ENCODE measurements at regions of chr6 and their contacts with region 1.

Region 1: DNA sequence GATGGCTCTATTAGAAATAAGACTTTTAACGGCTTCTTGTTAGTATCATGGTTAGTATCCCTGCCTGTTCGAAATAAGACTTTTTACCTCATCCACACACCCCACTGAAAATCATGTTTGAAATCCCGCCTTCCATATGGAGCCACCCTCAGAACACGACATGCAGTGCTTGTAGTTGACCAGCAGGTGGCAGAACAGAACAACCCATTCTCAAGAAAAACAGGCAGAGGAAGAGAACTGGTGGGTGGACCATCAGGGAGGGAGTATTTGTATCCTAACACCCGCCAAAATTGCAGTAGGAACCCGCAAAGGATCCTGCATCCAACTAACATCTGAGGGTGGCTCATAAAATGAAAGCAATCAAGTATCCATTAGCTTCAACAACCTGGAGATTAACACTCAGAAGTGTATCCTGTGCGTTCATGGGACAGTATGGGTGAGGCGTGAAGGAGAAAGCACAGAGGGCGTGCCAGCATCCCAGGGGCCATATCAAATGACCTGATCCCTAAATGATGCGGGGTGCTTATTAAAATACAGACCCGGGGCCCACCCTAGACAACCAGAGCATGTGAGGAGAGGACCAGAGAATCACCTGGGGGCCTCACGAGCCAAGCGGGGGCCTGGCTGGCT is 89.6 kb upstream of the NHSL1 start:
- DNase-seq: peak; percentile 55
- H3K4me3 ChIP-seq: no peak overlapping the region
- H3K27ac ChIP-seq: no peak overlapping the region
- H3K4me1 ChIP-seq: peaks cover 18% of the 10 kb centered on the region
- H3K27me3 ChIP-seq: no peaks in the 10 kb centered on the region
- CTCF ChIP-seq: peak; percentile 93 to 94

Region 2: DNA sequence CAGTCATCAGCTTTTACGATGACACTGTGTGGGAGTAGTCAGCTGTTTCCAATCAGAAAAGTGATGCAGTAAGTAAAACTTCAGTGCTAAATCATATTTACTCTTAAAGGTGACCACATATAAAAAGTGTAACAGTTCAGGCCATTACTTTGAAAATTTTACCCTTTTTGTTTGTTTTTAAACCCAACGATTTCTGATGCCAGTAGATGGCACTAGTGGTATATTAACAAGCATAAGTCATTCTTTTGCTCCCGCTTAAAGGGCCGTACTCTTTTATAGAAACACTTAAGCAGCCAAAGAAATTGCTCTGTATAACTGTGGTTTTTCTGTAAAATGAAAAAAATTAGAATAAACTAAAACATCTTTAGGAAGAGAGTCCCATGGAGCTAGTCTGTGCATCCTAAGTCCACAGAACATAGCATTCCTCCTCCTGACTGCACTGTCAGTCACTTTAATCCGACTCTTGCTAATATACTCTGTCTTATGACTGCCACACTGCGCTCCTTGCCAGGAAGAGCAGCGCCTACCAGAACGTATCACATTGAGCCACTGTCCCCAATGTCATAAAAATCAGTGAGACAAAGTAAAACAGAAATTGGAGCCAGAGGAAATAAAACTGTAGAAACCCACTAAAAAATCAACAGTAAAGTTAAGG is 159.8 kb before region 1 on chr6:
- CTCF ChIA-PET with region 1: no interaction called
- dilution Hi-C with region 1: no loop called
- in situ Hi-C with region 1: no loop called
- intact Hi-C with region 1: loop called (anchors 1 kb)
- DNase-seq: peak; percentile 24
- H3K4me3 ChIP-seq: no peak overlapping the region
- H3K27ac ChIP-seq: no peak overlapping the region
- H3K4me1 ChIP-seq: peaks cover 4% of the 10 kb centered on the region
- H3K27me3 ChIP-seq: no peaks in the 10 kb centered on the region
- CTCF ChIP-seq: peak; percentile 57 to 63

Region 3: DNA sequence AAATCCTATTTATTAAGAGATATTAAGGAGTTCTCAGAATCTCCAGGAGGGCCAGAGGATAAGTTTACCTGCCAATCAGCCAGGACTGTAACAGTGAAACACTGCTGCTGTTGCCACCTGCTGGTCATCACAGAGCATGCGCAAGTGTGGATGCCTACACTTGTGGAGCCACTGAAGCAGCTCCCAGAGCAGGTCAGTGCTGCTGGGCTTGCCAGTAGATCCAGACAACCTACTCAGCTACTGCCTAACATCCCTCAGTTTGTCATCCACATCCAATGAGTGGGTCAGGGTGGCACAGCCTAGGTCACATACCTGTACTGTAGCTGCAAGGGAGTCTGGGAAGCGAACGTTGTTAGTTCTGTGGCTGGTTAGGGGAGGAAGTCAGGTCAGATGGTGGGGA is 71.3 kb before region 1 on chr6:
- CTCF ChIA-PET with region 1: no interaction called
- dilution Hi-C with region 1: no loop called
- in situ Hi-C with region 1: no loop called
- intact Hi-C with region 1: loop called (anchors 5 kb)
- DNase-seq: peak; percentile 48
- H3K4me3 ChIP-seq: no peak overlapping the region
- H3K27ac ChIP-seq: no peak overlapping the region
- H3K4me1 ChIP-seq: peaks cover 8% of the 10 kb centered on the region
- H3K27me3 ChIP-seq: no peaks in the 10 kb centered on the region
- CTCF ChIP-seq: peak; percentile 87 to 95

Region 4: GRCh38 chr6:138752017-138752416 is 163.1 kb after region 1 on chr6:
- CTCF ChIA-PET with region 1: no interaction called
- dilution Hi-C with region 1: loop called (anchors 5 kb)
- in situ Hi-C with region 1: no loop called
- intact Hi-C with region 1: no loop called
- DNase-seq: no peak
- H3K4me3 ChIP-seq: no peak overlapping the region
- H3K27ac ChIP-seq: no peak overlapping the region
- H3K4me1 ChIP-seq: no peaks in the 10 kb centered on the region
- H3K27me3 ChIP-seq: no peaks in the 10 kb centered on the region
- CTCF ChIP-seq: no peak

Region 5: DNA sequence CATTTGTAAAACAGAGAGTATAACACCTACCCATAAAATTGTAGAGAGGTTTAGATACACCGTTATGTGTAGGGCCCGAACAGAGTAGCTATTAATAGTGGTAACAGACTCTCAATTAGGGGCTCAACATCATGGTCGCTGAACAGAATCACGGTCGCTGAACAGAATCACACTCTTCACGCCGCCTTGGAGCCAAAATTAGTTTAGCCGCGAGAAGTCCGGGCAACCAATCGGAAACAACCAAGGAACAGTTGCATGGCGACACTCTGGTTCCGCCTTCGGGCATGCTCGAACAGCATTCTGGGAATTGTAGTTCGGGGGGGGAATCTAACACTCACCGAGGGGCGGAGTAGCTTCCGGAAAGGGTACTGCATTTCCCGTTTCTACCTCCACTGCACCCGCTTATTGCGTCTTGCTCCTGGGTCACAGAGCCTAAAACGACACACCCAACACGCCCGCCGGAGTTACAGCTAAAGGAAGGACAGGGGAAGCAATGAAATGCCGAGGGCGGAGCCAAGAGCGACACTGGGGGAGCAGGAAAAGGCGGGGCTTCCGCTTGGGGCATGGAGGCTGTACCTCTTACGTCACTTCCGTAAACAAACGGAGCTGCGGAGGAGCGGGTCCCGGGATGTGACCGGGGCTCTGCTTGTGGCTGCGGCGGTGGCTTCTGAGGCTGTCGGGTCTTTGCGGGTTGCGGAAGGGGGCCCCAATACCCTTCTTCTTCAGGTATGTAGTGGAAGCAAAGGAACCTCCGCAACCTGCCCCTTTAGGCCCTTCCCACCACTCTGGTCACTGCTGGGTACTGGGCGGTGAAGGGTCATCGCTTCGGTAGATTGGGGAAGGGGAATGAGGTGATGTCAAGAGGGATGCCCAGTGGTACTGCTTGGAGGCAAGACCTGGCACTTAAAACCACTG is 184.5 kb after region 1 on chr6 and contains the start of gene CCDC28A:
- CTCF ChIA-PET with region 1: no interaction called
- dilution Hi-C with region 1: no loop called
- in situ Hi-C with region 1: loop called (anchors 5 to 10 kb)
- intact Hi-C with region 1: no loop called
- DNase-seq: peak; percentile 95
- H3K4me3 ChIP-seq: peak within 1 kb of the TSS; percentile 94 to 96 (median 95)
- H3K27ac ChIP-seq: peak within 1 kb of the TSS; percentile 81
- H3K4me1 ChIP-seq: peaks cover 14% of the 10 kb centered on the region
- H3K27me3 ChIP-seq: no peaks in the 10 kb centered on the region
- CTCF ChIP-seq: no peak
- total RNA-seq, gene CCDC28A: 7.3 to 10.3 TPM

Region 6: DNA sequence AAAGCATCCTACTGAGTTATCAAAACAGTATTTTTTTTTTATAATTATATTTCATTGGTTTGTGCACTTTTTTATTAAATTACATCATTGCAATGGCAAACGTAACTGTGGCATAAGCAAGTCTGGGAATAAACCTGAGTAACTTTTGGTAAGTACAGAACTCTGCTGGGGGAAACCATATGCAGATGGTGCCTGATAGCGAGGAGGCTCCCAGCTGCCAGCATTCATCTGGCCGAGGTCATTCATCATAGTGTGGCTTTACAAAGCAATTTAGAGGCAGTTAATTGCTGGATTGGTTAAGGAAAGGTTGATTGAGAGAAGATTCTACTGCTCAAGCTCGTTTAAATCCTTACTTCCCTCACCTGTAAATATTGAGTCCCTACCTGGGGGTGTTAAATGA is 598.6 kb after region 1 on chr6:
- CTCF ChIA-PET with region 1: no interaction called
- dilution Hi-C with region 1: no loop called
- in situ Hi-C with region 1: no loop called
- intact Hi-C with region 1: no loop called
- DNase-seq: no peak
- H3K4me3 ChIP-seq: no peak overlapping the region
- H3K27ac ChIP-seq: no peak overlapping the region
- H3K4me1 ChIP-seq: no peaks in the 10 kb centered on the region
- H3K27me3 ChIP-seq: no peaks in the 10 kb centered on the region
- CTCF ChIP-seq: no peak

Region 7: GRCh38 chr6:139369568-139370282 is 780.8 kb after region 1 on chr6:
- CTCF ChIA-PET with region 1: interaction called, 12 read pairs
- dilution Hi-C with region 1: no loop called
- in situ Hi-C with region 1: no loop called
- intact Hi-C with region 1: loop called (anchors 5 kb)
- DNase-seq: peak; percentile 25
- H3K4me3 ChIP-seq: no peak overlapping the region
- H3K27ac ChIP-seq: no peak overlapping the region
- H3K4me1 ChIP-seq: peaks cover 13% of the 10 kb centered on the region
- H3K27me3 ChIP-seq: no peaks in the 10 kb centered on the region
- CTCF ChIP-seq: peak; percentile 60 to 63